ENCODE measurements at regions of chr22 and their contacts with region 1.

Region 1: GRCh38 chr22:17410576-17410975 is 41.3 kb downstream of the CECR2 start:
- DNase-seq: no peak
- ATAC-seq: no peak
- H3K4me3 Mint-ChIP-seq: no peak overlapping the region
- H3K27ac Mint-ChIP-seq: no peak overlapping the region
- H3K4me1 Mint-ChIP-seq: no peaks in the 10 kb centered on the region
- H3K27me3 Mint-ChIP-seq: peaks cover 3% of the 10 kb centered on the region
- CTCF ChIP-seq: no peak

Region 2: GRCh38 chr22:17303840-17304779 is 106.5 kb before region 1 on chr22:
- CTCF ChIA-PET with region 1: no interaction called
- POLR2A ChIA-PET with region 1: no interaction called
- intact Hi-C with region 1: no loop called
- DNase-seq: peak; percentile 37
- ATAC-seq: peak; percentile 96
- H3K4me3 Mint-ChIP-seq: peak overlapping the region; percentile 59
- H3K27ac Mint-ChIP-seq: peak overlapping the region; percentile 91
- H3K4me1 Mint-ChIP-seq: peaks cover 40% of the 10 kb centered on the region
- H3K27me3 Mint-ChIP-seq: no peaks in the 10 kb centered on the region
- CTCF ChIP-seq: no peak

Region 3: GRCh38 chr22:17397756-17398547 is 12.6 kb before region 1 on chr22:
- CTCF ChIA-PET with region 1: no interaction called
- POLR2A ChIA-PET with region 1: no interaction called
- intact Hi-C with region 1: loop called (anchors 1 kb)
- DNase-seq: no peak
- ATAC-seq: no peak
- H3K4me3 Mint-ChIP-seq: no peak overlapping the region
- H3K27ac Mint-ChIP-seq: no peak overlapping the region
- H3K4me1 Mint-ChIP-seq: no peaks in the 10 kb centered on the region
- H3K27me3 Mint-ChIP-seq: no peaks in the 10 kb centered on the region
- CTCF ChIP-seq: no peak

Region 4: GRCh38 chr22:17451316-17451715 is 40.7 kb after region 1 on chr22:
- CTCF ChIA-PET with region 1: no interaction called
- POLR2A ChIA-PET with region 1: no interaction called
- intact Hi-C with region 1: no loop called
- DNase-seq: no peak
- ATAC-seq: no peak
- H3K4me3 Mint-ChIP-seq: no peak overlapping the region
- H3K27ac Mint-ChIP-seq: no peak overlapping the region
- H3K4me1 Mint-ChIP-seq: no peaks in the 10 kb centered on the region
- H3K27me3 Mint-ChIP-seq: peaks cover 2% of the 10 kb centered on the region
- CTCF ChIP-seq: no peak